Sciatic nerve (tissue), 2 donors: ENCODE measurements at regions of chr6 and their contacts with region 1.

Region 1: GRCh38 chr6:53492860-53493634 is 51.9 kb downstream of the GCLC start:
- DNase-seq: no peak
- ATAC-seq: peak; percentile 75

Region 2: DNA sequence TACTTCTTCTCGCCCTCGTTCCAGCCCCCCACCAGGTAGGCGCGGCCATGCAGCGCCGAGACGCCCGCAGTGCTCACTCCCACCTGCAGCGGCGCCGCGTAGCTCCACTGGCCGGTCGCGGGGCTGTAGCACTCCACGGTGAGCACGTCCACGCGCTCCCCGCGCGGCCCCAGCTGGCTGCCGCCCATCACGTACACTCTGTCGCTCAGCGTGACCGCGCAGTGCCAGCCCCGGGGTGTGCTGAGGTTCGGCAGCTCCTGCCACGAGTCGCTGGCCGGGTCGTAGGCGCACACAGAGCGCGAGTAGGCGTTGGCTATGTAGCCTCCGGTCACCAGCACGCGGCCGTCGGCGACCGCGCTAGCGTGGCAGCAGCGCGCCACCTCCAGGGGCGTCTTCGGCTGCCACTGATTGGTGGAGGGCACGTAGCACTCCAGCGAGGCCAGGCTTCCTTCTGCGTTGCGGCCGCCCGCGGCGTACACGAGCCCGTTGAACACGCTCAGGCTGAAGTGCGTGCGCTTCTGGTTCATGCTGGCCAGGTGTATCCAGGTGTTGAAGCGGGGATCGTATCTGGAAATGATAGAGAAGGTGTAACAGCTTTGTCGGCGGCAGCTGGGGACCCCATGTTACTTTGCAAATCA is 158.8 kb after region 1 on chr6:
- intact Hi-C with region 1: loop called (anchors 10 kb)
- DNase-seq: peak; percentile 79
- ATAC-seq: peak; percentile 92